ENCODE measurements at regions of chr7 and their contacts with region 1.

Region 1: GRCh38 chr7:132580717-132581285 is 4.5 kb upstream of the PLXNA4 start:
- DNase-seq: peak; percentile 58
- H3K4me3 Mint-ChIP-seq: no peak overlapping the region
- H3K27ac Mint-ChIP-seq: no peak overlapping the region
- H3K4me1 Mint-ChIP-seq: peaks cover 7% of the 10 kb centered on the region
- H3K27me3 Mint-ChIP-seq: peaks cover 50% of the 10 kb centered on the region

Region 2: DNA sequence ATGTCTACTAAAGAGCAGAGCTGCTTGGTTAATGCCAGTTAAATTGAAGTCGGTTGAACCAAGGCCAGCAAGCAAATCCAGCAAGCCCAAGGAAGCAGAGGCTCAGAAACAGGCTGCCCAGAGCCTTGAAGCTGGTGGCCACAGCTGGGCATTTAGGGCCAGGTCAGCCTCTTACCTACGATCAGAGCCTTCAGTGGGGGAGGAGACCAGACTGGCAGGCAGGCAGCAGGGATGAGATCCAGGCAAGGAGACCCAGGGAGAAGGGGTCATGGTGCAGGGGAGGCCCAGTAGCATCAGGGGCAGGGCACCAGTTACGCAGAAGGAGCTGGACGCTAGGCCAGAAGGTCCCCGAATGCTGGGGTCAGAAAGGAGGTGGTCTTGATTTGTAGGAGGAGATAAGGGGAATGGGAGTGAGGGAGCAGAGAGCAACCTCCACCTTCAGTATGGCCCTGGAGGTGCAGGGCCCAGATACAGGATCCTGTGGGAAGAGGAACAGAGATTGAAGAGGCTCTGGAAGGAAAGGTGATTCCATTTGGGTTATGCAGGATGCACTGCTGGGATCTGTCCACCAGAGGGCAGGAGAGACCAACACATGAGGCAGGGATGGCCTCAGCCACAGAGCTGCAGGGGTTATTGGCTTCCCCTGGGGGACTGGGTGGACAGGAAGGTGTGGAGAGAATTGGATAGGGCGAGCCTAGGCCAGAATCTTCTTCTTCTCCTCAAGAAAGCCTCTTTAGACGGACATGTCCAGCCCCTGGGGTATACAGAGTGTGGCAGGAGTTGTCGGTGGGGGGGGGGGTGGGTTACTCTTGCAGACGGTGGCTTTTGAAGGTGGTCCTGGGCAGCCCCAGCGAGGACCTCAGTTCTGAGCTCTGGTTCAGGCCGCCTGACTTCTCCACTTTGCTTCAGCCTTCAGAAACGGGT is 891.8 kb before region 1 on chr7:
- intact Hi-C with region 1: loop called (anchors 5 kb)
- DNase-seq: peak; percentile 22
- H3K4me3 Mint-ChIP-seq: no peak overlapping the region
- H3K27ac Mint-ChIP-seq: no peak overlapping the region
- H3K4me1 Mint-ChIP-seq: peaks cover 7% of the 10 kb centered on the region
- H3K27me3 Mint-ChIP-seq: peaks cover 3% of the 10 kb centered on the region

Region 3: DNA sequence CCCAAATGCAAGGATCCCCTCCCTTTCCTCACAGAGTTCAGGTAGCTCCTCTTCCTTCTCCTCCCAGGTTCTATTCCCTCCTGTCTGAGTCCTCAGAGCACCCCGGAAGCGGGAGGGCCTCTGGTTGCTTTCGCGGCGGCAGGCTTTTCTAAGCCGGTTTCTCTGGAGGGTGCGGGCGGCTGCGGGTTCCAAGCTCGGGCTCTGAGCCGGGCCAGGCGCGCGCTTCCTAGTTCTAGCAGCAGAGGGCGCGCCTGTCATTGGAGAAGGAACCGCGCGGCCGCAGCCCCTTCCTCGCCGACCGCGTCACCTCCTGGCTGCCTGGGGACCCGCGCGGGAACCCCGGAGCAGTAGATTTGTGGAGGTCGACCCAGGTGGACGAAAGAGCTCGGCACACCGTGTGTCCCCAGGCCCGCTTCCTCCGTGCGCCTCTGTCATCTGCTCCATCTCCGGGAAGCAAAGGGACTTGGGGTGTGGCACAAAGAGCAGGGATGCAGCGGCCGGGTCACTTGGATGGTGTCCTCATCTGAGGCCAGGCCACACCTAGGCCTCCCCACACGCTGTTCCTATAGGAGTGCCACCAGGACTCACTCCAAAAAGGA is 635.4 kb before region 1 on chr7:
- intact Hi-C with region 1: loop called (anchors 2 kb)
- DNase-seq: peak; percentile 19
- H3K4me3 Mint-ChIP-seq: peak overlapping the region; percentile 2
- H3K27ac Mint-ChIP-seq: no peak overlapping the region
- H3K4me1 Mint-ChIP-seq: no peaks in the 10 kb centered on the region
- H3K27me3 Mint-ChIP-seq: peaks cover 5% of the 10 kb centered on the region

Region 4: DNA sequence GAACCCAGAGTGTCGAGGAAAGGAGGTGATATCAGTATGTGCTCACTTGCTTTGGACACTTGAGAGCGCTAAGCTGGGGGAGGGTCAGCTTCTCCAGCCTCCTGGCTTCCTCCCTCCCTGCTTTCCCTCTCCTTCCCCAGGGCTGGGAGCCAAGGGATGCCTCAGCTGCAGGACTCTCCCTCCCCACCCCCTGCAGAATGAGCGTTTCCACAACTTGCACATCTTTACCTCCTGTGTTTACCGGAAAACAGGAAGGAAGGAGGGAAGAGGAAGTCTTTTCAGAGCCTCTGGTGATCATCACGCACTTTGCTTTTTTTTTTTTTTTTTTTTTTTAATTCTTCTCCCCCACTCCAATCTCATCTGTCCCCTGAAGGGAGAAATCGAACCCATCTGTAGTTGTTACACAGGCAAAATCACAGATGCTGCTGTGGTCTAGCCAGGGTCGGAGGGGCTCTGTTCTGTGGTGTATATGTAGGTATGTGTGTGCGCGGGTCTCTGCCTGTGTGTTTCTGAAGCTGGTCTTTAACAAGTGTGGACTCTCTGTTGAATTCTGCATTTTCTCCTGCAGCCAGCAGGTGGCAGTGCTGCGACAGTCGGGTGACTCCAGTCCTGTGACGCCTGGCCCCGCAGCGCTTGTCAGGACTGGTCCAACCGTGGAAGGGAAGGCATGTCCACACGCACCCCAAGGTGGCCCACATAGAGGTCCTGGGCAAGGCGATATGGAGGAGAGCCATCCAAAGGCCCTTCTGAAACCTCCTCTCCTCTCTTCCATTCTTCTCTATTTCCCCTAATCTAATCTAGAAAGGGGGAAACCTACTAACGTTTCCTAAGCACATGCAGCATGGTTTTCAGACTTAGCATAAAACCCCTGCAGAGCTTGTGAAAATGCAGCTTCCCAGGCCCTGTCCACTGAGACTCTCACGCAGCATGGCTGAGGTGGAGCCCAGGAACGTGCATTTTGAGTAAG is 262.2 kb before region 1 on chr7:
- intact Hi-C with region 1: loop called (anchors 1 kb)
- DNase-seq: peak; percentile 57
- H3K4me3 Mint-ChIP-seq: peak overlapping the region; percentile 35
- H3K27ac Mint-ChIP-seq: no peak overlapping the region
- H3K4me1 Mint-ChIP-seq: peaks cover 16% of the 10 kb centered on the region
- H3K27me3 Mint-ChIP-seq: peaks cover 13% of the 10 kb centered on the region

Region 5: GRCh38 chr7:132394283-132395198 is 186.3 kb before region 1 on chr7:
- intact Hi-C with region 1: loop called (anchors 1 kb)
- DNase-seq: peak; percentile 20
- H3K4me3 Mint-ChIP-seq: no peak overlapping the region
- H3K27ac Mint-ChIP-seq: no peak overlapping the region
- H3K4me1 Mint-ChIP-seq: peaks cover 18% of the 10 kb centered on the region
- H3K27me3 Mint-ChIP-seq: peaks cover 19% of the 10 kb centered on the region

Region 6: DNA sequence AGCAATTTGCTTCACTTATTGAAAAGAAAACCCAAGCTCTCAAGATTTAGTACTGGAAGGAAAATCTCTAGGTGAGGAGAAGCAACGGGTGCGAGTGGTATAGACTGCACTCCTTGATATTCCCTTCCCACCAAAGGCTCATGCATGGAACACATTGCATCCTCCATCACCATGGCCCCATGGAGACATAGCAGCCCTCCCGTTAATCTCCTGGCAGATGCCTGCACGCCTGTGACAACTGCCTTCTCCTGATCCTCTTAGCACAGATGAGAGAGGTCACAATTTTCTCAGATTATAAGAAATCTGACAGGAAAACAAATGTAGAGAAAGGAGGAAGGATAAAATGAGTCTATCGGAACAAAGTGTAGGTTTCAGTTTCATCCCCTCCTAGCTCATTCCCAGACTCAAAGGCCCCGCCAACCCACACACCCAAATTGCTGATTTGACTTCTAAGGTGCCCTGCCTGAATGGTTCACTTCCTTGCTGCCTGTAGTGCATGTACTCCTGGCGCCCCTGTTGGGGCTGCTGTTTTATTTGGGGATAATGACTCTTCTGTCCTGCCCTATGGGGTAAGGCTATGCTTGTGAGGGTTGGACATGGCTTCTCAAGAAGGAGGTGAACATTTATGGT is 54.6 kb before region 1 on chr7:
- intact Hi-C with region 1: loop called (anchors 5 kb)
- DNase-seq: no peak
- H3K4me3 Mint-ChIP-seq: no peak overlapping the region
- H3K27ac Mint-ChIP-seq: peak overlapping the region; percentile 59
- H3K4me1 Mint-ChIP-seq: peaks cover 18% of the 10 kb centered on the region
- H3K27me3 Mint-ChIP-seq: peaks cover 6% of the 10 kb centered on the region

Region 7: GRCh38 chr7:133434055-133434865 is 853.5 kb after region 1 on chr7:
- intact Hi-C with region 1: loop called (anchors 1 kb)
- DNase-seq: no peak
- H3K4me3 Mint-ChIP-seq: no peak overlapping the region
- H3K27ac Mint-ChIP-seq: no peak overlapping the region
- H3K4me1 Mint-ChIP-seq: no peaks in the 10 kb centered on the region
- H3K27me3 Mint-ChIP-seq: no peaks in the 10 kb centered on the region